Pancreas (tissue), 10 donors: ENCODE measurements at regions of chr12 and their contacts with region 1.

Region 1: GRCh38 chr12:49578471-49579112 is 10.7 kb upstream of the MCRS1 start:
- DNase-seq: no peak
- ATAC-seq: no peak
- H3K4me3 ChIP-seq: no peak overlapping the region
- H3K27ac ChIP-seq: no peak overlapping the region
- H3K4me1 ChIP-seq: peaks cover 0 to 4% (median 4%) of the 10 kb centered on the region in 3 donors
- H3K27me3 ChIP-seq: no peaks in the 10 kb centered on the region
- CTCF ChIP-seq: no peak

Region 2: GRCh38 chr12:49358483-49359141 is 220.0 kb before region 1 on chr12:
- intact Hi-C with region 1: loop called in 2 of 3 experiments (anchors 10 kb)
- DNase-seq: peak in 2 of 6 donors; percentile 34 to 58
- ATAC-seq: peak; percentile 73 to 97 (median 95)
- H3K4me3 ChIP-seq: no peak overlapping the region
- H3K27ac ChIP-seq: no peak overlapping the region
- H3K4me1 ChIP-seq: no peaks in the 10 kb centered on the region
- H3K27me3 ChIP-seq: no peaks in the 10 kb centered on the region
- CTCF ChIP-seq: peak; percentile 35 to 71 (median 43)

Region 3: DNA sequence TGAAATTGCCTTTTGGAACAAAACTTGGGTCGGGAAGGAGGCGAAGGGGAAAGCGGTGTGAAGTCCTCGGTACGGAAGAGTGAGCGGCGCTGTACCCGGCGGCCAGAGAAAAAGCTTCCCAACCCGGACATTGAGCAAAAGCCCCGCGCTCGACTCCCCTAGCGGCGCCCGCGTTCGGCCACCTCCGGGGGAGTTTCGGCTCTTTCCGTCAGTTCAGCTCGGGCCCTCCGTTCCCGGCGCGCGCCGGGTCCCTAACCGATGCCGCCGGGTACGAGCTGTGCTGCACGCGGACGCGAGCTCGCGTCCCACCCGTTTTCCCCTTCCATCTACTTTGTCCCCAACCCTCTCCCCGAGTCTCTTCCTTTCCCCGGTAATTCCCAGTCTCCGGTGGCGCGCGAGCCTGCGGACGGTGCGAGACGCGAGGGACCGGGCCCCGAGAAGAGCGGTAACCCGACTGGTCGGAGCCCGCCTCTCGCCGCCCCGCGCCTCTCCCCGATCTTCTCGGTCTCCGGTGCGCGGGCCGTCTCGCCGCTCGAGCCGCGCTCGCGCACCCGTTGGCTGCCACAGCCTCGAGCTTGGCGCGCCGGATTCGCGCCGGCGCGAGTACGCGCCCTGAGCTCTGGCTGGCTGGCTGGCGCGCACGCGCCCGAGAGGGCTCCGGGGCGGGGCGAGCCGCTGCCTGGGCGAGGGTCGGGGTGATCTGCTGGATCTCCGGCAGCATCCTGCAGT is 211.8 kb before region 1 on chr12:
- intact Hi-C with region 1: loop called in 1 of 3 experiments (anchors 10 kb)
- DNase-seq: peak; percentile 81 to 95 (median 90)
- ATAC-seq: peak; percentile 87 to 92 (median 90)
- H3K4me3 ChIP-seq: peak overlapping the region; percentile 74 to 87 (median 84)
- H3K27ac ChIP-seq: peak overlapping the region; percentile 74 to 93 (median 85)
- H3K4me1 ChIP-seq: peaks cover 0 to 12% (median 12%) of the 10 kb centered on the region in 3 donors
- H3K27me3 ChIP-seq: no peaks in the 10 kb centered on the region
- CTCF ChIP-seq: peak in 2 of 4 donors; percentile 13 to 25